GM12878 (cell line): ENCODE measurements at regions of chr5 and their contacts with region 1.

Region 1: GRCh38 chr5:56900858-56901578 is 8.4 kb upstream of the SETD9 start:
- DNase-seq: no peak
- ATAC-seq: peak; percentile 88
- H3K4me3 ChIP-seq: no peak overlapping the region
- H3K27ac ChIP-seq: no peak overlapping the region
- H3K4me1 ChIP-seq: no peaks in the 10 kb centered on the region
- H3K27me3 ChIP-seq: no peaks in the 10 kb centered on the region; a peak in 1 of 4 replicates
- CTCF ChIP-seq: peak; percentile 60 to 83 (median 75); a peak in 5 of 6 replicates
- EP300 ChIP-seq: no peak
- POLR2A ChIP-seq: no peak
- RAD21 ChIP-seq: peak; percentile 89

Region 2: GRCh38 chr5:56917534-56917933 is 16.5 kb after region 1 on chr5:
- CTCF ChIA-PET with region 1: interaction called, 10 read pairs
- POLR2A ChIA-PET with region 1: interaction called, 3 read pairs
- RAD21 ChIA-PET with region 1: no interaction called
- SMC1A ChIA-PET with region 1: interaction called, 4 read pairs
- in situ Hi-C with region 1: no loop called
- intact Hi-C with region 1: no loop called
- DNase-seq: no peak
- ATAC-seq: peak; percentile 39; the same call in 2 of the 3 replicates
- H3K4me3 ChIP-seq: no peak overlapping the region
- H3K27ac ChIP-seq: no peak overlapping the region
- H3K4me1 ChIP-seq: no peaks in the 10 kb centered on the region
- H3K27me3 ChIP-seq: no peaks in the 10 kb centered on the region
- CTCF ChIP-seq: no peak
- EP300 ChIP-seq: no peak
- POLR2A ChIP-seq: no peak
- RAD21 ChIP-seq: no peak

Region 3: DNA sequence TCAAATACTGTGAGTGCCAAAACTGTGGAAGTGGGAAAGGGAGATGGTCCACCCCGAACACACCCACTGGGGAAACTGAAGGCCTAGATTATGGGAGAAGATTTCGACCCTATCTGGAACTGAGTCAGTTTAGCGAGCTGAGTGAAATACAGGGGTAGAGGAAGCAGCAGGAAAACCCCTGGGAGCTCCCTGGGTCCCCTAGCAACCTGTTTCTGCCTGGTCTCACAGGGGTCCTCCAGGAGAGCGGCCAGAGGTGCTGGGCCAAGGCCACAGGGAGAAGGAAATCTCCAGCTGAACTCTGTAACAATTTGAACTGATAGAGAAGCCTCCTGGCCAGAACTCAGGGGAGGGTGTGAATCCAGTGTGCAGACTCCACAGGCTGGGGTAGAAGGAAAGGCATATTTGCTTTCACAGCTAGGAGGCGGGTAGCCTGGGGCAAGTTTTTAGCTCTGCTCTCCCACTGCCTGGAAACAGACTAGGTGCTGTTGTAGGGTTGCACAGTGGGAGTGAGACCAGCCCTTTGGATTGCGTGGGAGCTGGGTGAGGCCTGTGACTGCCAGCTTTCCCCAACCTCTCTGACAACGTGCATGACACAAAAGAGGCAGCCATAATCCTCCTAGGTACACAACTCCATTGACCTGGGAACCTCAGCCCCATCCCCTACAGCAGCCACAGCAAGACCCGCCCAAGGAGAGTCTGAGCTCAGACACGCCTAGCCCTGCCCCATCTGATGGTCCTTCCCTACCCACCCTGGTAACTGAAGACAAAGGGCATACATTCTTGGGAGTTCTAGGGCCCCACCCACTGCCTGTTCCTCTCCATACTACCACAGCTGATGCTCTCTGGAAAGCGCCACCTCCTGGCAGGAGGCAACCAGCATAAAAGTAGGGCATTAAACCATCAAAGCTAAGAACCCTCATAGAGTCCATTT is 194.0 kb after region 1 on chr5:
- CTCF ChIA-PET with region 1: interaction called, 10 read pairs
- POLR2A ChIA-PET with region 1: no interaction called
- RAD21 ChIA-PET with region 1: interaction called, 4 read pairs
- SMC1A ChIA-PET with region 1: interaction called, 8 read pairs
- in situ Hi-C with region 1: no loop called
- intact Hi-C with region 1: no loop called
- DNase-seq: no peak
- ATAC-seq: no peak
- H3K4me3 ChIP-seq: no peak overlapping the region
- H3K27ac ChIP-seq: no peak overlapping the region
- H3K4me1 ChIP-seq: no peaks in the 10 kb centered on the region
- H3K27me3 ChIP-seq: no peaks in the 10 kb centered on the region
- CTCF ChIP-seq: peak in 2 of 3 experiments; percentile 12 to 20; a peak in 2 of 6 replicates
- EP300 ChIP-seq: no peak
- POLR2A ChIP-seq: no peak
- RAD21 ChIP-seq: no peak

Region 4: DNA sequence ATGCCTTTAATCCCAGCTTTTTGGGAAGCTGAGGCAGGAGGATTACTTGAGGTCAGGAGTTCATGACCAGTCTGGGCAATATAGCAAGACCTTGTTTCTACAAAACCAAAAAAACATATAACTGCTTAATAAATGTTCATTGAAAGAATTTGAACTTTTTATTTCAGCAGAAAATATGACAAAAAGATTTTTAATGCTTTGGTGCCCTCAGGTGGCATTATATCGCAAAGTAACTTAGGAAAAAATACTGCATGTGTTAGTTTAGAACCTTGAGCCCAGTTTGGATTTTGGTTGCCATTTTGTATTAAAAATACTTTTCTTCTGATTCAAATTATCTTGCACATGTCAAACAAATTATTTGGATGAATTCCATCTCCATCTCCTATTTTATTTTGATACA is 376.1 kb after region 1 on chr5:
- CTCF ChIA-PET with region 1: interaction called, 3 read pairs
- POLR2A ChIA-PET with region 1: no interaction called
- RAD21 ChIA-PET with region 1: no interaction called
- SMC1A ChIA-PET with region 1: interaction called, 6 read pairs
- in situ Hi-C with region 1: no loop called
- intact Hi-C with region 1: loop called (anchors 2 kb)
- DNase-seq: no peak
- ATAC-seq: no peak
- H3K4me3 ChIP-seq: no peak overlapping the region
- H3K27ac ChIP-seq: no peak overlapping the region
- H3K4me1 ChIP-seq: no peaks in the 10 kb centered on the region
- H3K27me3 ChIP-seq: no peaks in the 10 kb centered on the region
- CTCF ChIP-seq: peak in 2 of 3 experiments; percentile 16 to 31; a peak in 2 of 6 replicates
- EP300 ChIP-seq: no peak
- POLR2A ChIP-seq: no peak
- RAD21 ChIP-seq: peak; percentile 41